ENCODE measurements at regions of chr11 and their contacts with region 1.

Region 1: DNA sequence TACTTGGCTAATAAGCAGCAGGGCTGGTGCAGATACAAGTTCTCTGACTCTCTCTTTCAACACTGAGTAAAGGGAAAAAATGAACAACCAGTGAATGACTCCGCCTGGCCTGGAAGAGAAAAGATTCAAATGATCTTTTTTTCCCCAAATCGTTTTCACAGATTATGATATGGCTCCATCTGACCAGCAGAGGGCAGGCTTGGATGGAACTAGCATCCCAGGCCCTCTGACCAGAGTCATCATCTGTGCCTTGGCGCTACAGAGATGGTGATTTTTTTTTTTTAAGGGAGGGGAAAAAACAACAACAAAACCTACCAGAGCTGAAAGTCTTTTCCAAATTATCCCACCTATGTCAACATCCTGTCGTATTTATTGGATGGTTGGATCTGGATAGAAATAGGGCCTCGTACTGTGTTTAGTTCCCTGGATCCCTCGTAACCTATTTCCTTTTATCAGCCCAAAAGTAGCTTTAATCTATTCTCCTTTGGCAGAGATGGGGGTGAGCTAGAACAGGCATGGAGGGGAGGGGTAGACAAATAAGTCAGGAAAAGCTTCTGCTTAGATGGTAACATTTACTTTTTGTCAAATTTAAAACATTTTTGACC is 69.7 kb downstream of the PRSS23 start:
- DNase-seq: peak; percentile 10 to 74
- H3K4me3 ChIP-seq: no peak overlapping the region
- H3K27ac ChIP-seq: no peak overlapping the region
- H3K4me1 ChIP-seq: no peaks in the 10 kb centered on the region
- H3K27me3 ChIP-seq: no peaks in the 10 kb centered on the region
- CTCF ChIP-seq: peak; percentile 62 to 87 (median 78)
- EP300 ChIP-seq: no peak
- POLR2A ChIP-seq: no peak
- RAD21 ChIP-seq: peak; percentile 86 to 90

Region 2: DNA sequence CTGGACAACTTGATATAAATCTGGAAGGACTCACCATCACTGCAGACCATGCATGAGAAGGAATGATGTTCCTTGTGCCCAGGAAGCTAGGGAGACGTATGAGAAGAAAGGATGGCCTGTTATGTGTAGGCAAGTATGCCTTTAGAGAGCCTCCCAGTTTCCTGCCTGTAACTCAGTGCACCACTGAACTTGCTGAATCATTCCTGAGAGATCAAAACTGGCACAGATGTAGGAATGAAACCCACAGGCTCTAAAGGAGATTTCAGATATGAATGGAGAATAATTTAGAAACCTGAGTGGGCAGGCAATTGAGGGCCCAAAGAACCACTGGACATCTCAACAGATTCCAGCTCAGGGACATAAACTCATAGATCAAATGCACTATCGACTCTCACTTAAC is 108.1 kb before region 1 on chr11:
- CTCF ChIA-PET with region 1: no interaction called
- POLR2A ChIA-PET with region 1: no interaction called
- DNase-seq: no peak
- H3K4me3 ChIP-seq: no peak overlapping the region
- H3K27ac ChIP-seq: no peak overlapping the region
- H3K4me1 ChIP-seq: no peaks in the 10 kb centered on the region
- H3K27me3 ChIP-seq: no peaks in the 10 kb centered on the region
- CTCF ChIP-seq: no peak
- EP300 ChIP-seq: no peak
- POLR2A ChIP-seq: no peak
- RAD21 ChIP-seq: no peak

Region 3: DNA sequence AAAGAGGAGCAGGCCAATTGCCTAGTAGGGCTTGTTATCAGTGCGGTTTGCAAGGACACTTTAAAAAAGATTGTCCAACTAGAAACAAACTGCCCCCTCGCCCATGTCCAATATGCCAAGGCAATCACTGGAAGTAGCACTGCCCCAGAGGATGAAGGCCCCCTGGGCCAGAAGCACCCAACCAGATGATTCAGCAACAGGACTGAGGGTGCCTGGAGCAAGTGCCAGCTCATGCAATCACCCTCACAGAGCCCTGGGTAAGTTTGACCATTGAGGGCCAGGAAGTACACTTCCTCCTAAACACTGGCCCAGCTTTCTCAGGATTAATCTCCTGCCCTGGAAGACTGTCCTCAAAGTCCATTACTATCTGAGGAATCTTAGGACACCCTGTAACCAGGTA is 21.2 kb before region 1 on chr11:
- CTCF ChIA-PET with region 1: interaction called, 15 read pairs
- POLR2A ChIA-PET with region 1: interaction called, 3 read pairs
- DNase-seq: no peak
- H3K4me3 ChIP-seq: no peak overlapping the region
- H3K27ac ChIP-seq: no peak overlapping the region
- H3K4me1 ChIP-seq: no peaks in the 10 kb centered on the region
- H3K27me3 ChIP-seq: no peaks in the 10 kb centered on the region
- CTCF ChIP-seq: no peak
- EP300 ChIP-seq: no peak
- POLR2A ChIP-seq: no peak
- RAD21 ChIP-seq: no peak

Region 4: DNA sequence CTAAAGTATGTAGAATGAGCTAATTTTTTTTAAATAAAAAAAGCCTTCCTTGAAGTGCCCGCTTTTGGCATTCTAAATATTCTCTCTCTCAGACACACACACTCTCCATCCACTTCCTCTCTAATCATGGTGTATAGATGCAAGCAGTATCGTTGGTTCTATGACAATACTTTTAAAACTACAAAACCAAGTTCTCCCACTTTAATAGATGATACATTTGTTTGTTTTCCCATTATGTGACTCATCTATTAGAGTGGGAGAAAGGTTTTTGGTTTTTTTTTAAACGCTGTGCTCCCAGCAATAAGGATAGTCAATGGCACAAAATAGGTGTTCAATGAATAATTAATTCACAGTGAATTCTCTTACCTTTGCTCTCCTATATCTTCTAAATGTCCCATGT is 40.5 kb after region 1 on chr11:
- CTCF ChIA-PET with region 1: interaction called, 152 read pairs
- POLR2A ChIA-PET with region 1: interaction called, 3 read pairs
- DNase-seq: no peak
- H3K4me3 ChIP-seq: no peak overlapping the region
- H3K27ac ChIP-seq: no peak overlapping the region
- H3K4me1 ChIP-seq: no peaks in the 10 kb centered on the region
- H3K27me3 ChIP-seq: no peaks in the 10 kb centered on the region
- CTCF ChIP-seq: no peak
- EP300 ChIP-seq: no peak
- POLR2A ChIP-seq: no peak
- RAD21 ChIP-seq: no peak

Region 5: DNA sequence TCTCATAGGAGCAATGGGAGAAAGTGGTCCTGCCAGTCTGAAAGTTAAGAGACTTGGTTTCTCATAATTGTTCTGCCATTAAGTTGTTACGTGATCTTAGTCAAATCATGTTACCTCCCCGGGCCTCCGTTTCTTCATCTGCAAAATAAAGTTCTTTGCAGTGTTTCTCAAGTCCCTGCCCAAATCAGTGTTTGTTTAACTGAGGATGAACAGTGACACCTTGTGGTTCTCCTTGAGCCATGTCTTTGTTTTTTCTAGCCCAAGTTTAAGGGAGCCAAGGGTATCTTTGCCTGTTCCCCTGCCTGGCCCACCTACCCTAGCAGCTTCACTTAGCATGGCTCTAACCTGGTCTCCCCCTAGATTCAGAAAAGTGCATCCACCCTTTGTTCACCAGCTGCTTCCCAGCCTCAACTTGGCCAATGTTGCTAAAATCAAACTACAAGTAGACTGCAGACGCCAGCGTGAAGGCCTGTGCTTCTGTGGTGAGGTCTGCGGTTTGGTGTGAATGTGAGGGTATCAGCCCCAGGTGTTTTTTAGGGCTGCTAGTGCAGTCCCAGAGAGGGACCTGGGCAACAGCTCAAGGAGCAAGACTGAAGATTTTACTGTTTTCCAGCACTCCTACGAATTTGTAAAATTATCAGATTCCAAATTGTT is 49.6 kb after region 1 on chr11:
- CTCF ChIA-PET with region 1: interaction called, 152 read pairs
- POLR2A ChIA-PET with region 1: no interaction called
- DNase-seq: no peak
- H3K4me3 ChIP-seq: no peak overlapping the region
- H3K27ac ChIP-seq: no peak overlapping the region
- H3K4me1 ChIP-seq: peaks cover 0 to 10% (median 3%) of the 10 kb centered on the region in 4 experiments; a peak in 4 of 7 replicates
- H3K27me3 ChIP-seq: no peaks in the 10 kb centered on the region
- CTCF ChIP-seq: peak in 2 of 3 experiments; percentile 79 to 87; a peak in 3 of 4 replicates
- EP300 ChIP-seq: no peak
- POLR2A ChIP-seq: no peak
- RAD21 ChIP-seq: peak; percentile 89 to 91

Region 6: DNA sequence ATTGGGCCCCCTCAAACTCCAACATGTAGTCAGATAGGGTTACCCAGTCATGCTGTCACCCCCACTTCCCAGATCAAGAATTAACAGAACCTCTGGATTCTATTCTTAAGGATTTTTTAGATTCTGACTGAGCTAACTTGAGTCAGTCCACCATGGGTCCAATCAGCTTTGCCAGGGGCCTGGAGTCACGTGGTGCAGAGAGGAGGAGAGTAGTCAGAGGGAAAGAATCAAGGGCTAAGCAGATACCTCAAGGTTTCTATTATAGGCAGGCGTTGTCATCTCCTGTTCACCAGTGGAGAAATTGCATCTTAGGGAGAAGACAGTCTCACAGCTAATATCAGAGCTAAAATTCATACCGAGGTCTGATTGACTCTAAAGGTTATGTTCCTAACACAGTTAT is 56.9 kb after region 1 on chr11:
- CTCF ChIA-PET with region 1: interaction called, 152 read pairs
- POLR2A ChIA-PET with region 1: no interaction called
- DNase-seq: no peak
- H3K4me3 ChIP-seq: no peak overlapping the region
- H3K27ac ChIP-seq: no peak overlapping the region
- H3K4me1 ChIP-seq: peaks cover 0 to 9% (median 4%) of the 10 kb centered on the region in 4 experiments; a peak in 4 of 7 replicates
- H3K27me3 ChIP-seq: no peaks in the 10 kb centered on the region
- CTCF ChIP-seq: no peak
- EP300 ChIP-seq: no peak
- POLR2A ChIP-seq: no peak
- RAD21 ChIP-seq: no peak

Measured in H1 (cell line).